ENCODE measurements at regions of chr10 and their contacts with region 1.

Region 1: GRCh38 chr10:3961082-3961481 is 176.1 kb upstream of the KLF6 start:
- DNase-seq: peak; percentile 91
- ATAC-seq: peak; percentile 98
- H3K4me3 Mint-ChIP-seq: peak overlapping the region; percentile 65
- H3K27ac Mint-ChIP-seq: peak overlapping the region; percentile 82
- H3K4me1 Mint-ChIP-seq: peaks cover 55% of the 10 kb centered on the region
- H3K27me3 Mint-ChIP-seq: no peaks in the 10 kb centered on the region

Region 2: DNA sequence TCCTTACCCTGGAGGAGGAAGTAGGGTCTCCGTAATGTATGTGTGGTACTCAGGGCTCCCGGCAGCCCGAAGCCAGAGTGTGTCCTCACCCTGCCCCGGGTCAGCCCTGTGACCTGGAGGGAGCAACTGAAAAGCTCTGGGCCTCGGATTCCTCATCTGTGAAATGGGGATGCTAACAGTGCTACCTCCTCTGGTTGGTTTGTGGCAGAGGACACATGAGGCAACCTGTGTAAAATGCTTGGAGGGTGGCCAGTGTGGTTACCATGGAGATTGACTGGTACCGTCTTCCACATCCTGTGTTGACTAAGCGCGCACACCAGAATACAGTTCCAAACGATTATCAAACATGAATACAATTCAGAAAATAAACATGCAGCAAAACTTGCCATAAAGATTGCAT is 12.2 kb before region 1 on chr10:
- CTCF ChIA-PET with region 1: interaction called, 14 read pairs
- DNase-seq: peak; percentile 94
- ATAC-seq: peak; percentile 80
- H3K4me3 Mint-ChIP-seq: peak overlapping the region; percentile 81
- H3K27ac Mint-ChIP-seq: peak overlapping the region; percentile 91
- H3K4me1 Mint-ChIP-seq: peaks cover 79% of the 10 kb centered on the region
- H3K27me3 Mint-ChIP-seq: no peaks in the 10 kb centered on the region

Region 3: GRCh38 chr10:3972460-3973301 is 11.6 kb after region 1 on chr10:
- CTCF ChIA-PET with region 1: interaction called, 36 read pairs
- DNase-seq: peak; percentile 76
- ATAC-seq: peak; percentile 90
- H3K4me3 Mint-ChIP-seq: peak overlapping the region; percentile 62
- H3K27ac Mint-ChIP-seq: peak overlapping the region; percentile 96
- H3K4me1 Mint-ChIP-seq: peaks cover 53% of the 10 kb centered on the region
- H3K27me3 Mint-ChIP-seq: no peaks in the 10 kb centered on the region